ENCODE measurements at regions of chr22 and their contacts with region 1.

Region 1: GRCh38 chr22:20238536-20238900 is 29.6 kb downstream of the RTN4R start:
- DNase-seq: no peak
- ATAC-seq: peak; percentile 95
- H3K4me3 ChIP-seq: no peak overlapping the region
- H3K27ac ChIP-seq: peak overlapping the region; percentile 44; the same call in 1 of the 2 replicates
- H3K4me1 ChIP-seq: peaks cover 14% of the 10 kb centered on the region
- H3K27me3 ChIP-seq: no peaks in the 10 kb centered on the region; a peak in 1 of 4 replicates
- CTCF ChIP-seq: peak; percentile 73 to 77 (median 77)
- EP300 ChIP-seq: no peak
- POLR2A ChIP-seq: no peak
- RAD21 ChIP-seq: peak; percentile 69

Region 2: GRCh38 chr22:20174785-20175596 is 63.5 kb before region 1 on chr22:
- CTCF ChIA-PET with region 1: interaction called, 15 read pairs
- POLR2A ChIA-PET with region 1: no interaction called
- RAD21 ChIA-PET with region 1: interaction called, 11 read pairs
- SMC1A ChIA-PET with region 1: no interaction called
- in situ Hi-C with region 1: no loop called
- intact Hi-C with region 1: no loop called
- DNase-seq: no peak
- ATAC-seq: peak; percentile 61; the same call in 2 of the 3 replicates
- H3K4me3 ChIP-seq: no peak overlapping the region
- H3K27ac ChIP-seq: no peak overlapping the region
- H3K4me1 ChIP-seq: no peaks in the 10 kb centered on the region
- H3K27me3 ChIP-seq: no peaks in the 10 kb centered on the region
- CTCF ChIP-seq: 0 out of 6 replicates have a peak, but pooled peaks of 1 of the 3 experiments have one; percentile 12
- EP300 ChIP-seq: no peak
- POLR2A ChIP-seq: no peak
- RAD21 ChIP-seq: peak; percentile 22; the same call in 1 of the 2 replicates

Region 3: GRCh38 chr22:20180245-20180630 is 58.3 kb before region 1 on chr22:
- CTCF ChIA-PET with region 1: interaction called, 15 read pairs
- POLR2A ChIA-PET with region 1: no interaction called
- RAD21 ChIA-PET with region 1: interaction called, 11 read pairs
- SMC1A ChIA-PET with region 1: interaction called, 4 read pairs
- in situ Hi-C with region 1: no loop called
- intact Hi-C with region 1: no loop called
- DNase-seq: no peak
- ATAC-seq: peak; percentile 53; the same call in 2 of the 3 replicates
- H3K4me3 ChIP-seq: no peak overlapping the region
- H3K27ac ChIP-seq: no peak overlapping the region
- H3K4me1 ChIP-seq: no peaks in the 10 kb centered on the region
- H3K27me3 ChIP-seq: no peaks in the 10 kb centered on the region; a peak in 1 of 4 replicates
- CTCF ChIP-seq: no peak
- EP300 ChIP-seq: no peak
- POLR2A ChIP-seq: no peak
- RAD21 ChIP-seq: no peak